Mucosa of descending colon (tissue), 3 donors: ENCODE measurements at regions of chr2 and their contacts with region 1.

Region 1: DNA sequence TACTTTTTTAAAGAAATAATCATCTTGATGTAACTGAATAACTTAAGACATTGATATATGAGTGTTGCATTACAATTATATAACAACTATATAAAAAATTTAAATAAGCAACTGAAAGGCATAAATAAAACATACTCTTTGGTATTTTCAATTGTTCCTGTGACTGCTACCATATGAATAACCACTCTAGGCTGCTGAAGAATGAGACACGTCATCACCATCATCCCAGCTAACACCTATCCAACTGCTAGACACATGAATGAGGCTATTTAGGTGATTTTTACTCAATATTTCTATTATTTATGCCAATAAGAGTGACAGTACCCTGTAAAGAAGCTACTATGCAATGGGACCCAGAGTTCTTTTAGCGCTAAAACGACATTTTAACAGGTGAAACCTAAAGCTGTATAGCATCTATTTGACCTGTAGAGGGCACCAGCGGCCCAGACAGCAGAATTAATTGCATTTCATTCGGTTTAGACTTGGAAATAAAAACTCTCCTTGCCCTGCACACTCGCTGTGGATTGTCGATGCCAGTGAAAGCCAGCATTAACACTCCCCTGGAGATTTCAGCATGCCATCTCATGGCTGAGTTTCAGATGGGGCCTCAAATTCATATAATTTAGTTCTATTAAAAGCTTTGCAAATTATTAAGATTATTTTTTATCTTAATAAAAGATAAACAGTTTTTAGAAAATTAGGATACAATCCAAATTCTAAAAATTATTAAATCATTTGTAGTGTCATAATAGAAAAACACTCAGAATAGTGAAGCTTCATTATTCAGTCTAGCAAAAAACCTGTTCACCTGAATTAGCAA is 89.4 kb upstream of the MAP2 start:
- DNase-seq: peak in 2 of 3 donors; percentile 31 to 38
- ATAC-seq: peak; percentile 43
- H3K4me3 ChIP-seq: no peak overlapping the region
- H3K4me1 ChIP-seq: no peaks in the 10 kb centered on the region
- CTCF ChIP-seq: peak; percentile 50

Region 2: GRCh38 chr2:209179647-209180046 is 154.8 kb before region 1 on chr2:
- intact Hi-C with region 1: no loop called
- DNase-seq: no peak
- ATAC-seq: no peak
- H3K4me3 ChIP-seq: no peak overlapping the region
- H3K4me1 ChIP-seq: no peaks in the 10 kb centered on the region
- CTCF ChIP-seq: no peak

Region 3: GRCh38 chr2:209577376-209578357 is 243.3 kb after region 1 on chr2:
- intact Hi-C with region 1: loop called in 1 of 2 experiments (anchors 10 kb)
- DNase-seq: peak in 1 of 3 donors; percentile 7
- ATAC-seq: no peak
- H3K4me3 ChIP-seq: no peak overlapping the region
- H3K4me1 ChIP-seq: no peaks in the 10 kb centered on the region
- CTCF ChIP-seq: no peak